ENCODE measurements at regions of chr14 and their contacts with region 1.

Region 1: DNA sequence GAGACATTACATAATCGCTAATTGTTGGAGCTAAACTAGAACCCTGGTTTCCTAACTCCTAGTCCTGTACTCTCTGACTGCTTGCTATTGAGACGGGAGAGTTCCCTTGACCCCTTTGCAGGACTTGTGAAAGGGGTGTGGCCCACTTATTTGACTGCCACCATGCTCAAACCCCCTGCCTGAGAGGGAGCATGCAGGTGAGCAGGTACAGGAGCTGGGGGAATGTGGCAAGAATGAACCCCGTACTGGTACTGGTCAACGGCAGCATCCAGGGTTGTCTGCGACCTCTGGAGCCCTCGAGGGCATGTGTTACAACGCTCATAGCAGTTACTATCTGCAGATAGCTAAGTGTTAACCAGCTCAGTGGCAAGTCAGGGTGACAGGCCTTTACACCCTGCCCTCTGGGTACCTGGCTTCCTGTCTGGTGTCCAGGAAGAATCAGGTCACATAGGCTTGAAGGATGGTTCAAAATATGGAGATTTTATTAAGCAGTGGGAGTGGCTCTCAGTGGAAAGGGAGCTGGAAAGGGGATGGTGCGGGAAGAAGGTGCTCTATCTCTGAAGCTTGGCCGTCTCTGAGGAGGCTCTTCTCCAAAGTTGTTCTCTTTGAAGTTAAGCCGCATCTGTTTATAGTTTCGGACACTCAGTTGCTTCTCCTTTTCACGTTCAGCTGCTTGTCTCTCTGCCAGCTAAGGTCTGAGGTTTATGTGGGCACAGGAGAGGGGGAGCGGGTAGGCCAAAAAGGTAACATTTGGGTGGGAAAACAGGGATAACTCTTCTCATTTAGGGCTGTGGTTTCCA is 305.5 kb downstream of the RGS6 start:
- DNase-seq: no peak
- H3K4me3 ChIP-seq: no peak overlapping the region
- H3K27ac ChIP-seq: no peak overlapping the region
- H3K4me1 ChIP-seq: no peaks in the 10 kb centered on the region
- H3K27me3 ChIP-seq: no peaks in the 10 kb centered on the region
- CTCF ChIP-seq: no peak
- POLR2A ChIP-seq: no peak

Region 2: GRCh38 chr14:71539650-71540285 is 698.0 kb before region 1 on chr14:
- intact Hi-C with region 1: loop called (anchors 5 kb)
- DNase-seq: no peak
- H3K4me3 ChIP-seq: no peak overlapping the region
- H3K27ac ChIP-seq: no peak overlapping the region
- H3K4me1 ChIP-seq: peaks cover 0 to 4% of the 10 kb centered on the region in 2 donors
- H3K27me3 ChIP-seq: no peaks in the 10 kb centered on the region
- CTCF ChIP-seq: no peak
- POLR2A ChIP-seq: no peak

Measured in breast epithelium (tissue), 4 donors.